Pancreas (tissue), 10 donors: ENCODE measurements at regions of chr17 and their contacts with region 1.

Region 1: DNA sequence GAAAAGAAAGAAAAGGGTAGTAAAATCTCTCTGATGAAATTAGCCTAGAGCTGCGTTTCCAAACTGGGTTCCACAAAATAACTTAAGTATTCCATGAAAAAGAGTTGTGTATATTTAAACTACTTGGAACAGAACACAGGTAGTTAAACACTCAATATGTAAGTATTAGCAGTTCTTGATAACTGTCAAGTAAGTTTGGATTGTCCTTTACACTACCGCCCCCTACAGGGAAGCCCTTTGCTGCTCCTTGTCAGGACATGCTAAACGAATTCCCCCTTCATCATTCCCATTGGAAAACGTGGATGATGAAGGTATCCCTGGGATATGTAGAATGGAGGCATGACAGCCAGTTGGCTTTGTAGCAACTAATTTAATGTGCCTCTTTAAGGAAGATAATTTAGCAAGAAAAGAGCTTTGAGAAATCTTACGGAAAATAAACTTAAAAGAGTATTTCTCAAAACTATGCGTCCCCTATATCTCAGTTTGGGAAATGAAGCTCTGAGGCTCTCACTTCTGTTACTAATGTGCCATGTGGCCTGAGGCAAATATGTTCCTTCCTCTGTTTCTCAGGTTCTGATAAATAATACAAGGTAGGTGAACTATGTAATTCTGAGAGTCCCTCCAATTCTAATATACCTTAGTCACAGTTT is 18.8 kb downstream of the NCBP3 start:
- DNase-seq: peak in 3 of 6 donors; percentile 26 to 65 (median 59)
- ATAC-seq: peak; percentile 56 to 85 (median 70)
- H3K4me3 ChIP-seq: no peak overlapping the region
- H3K27ac ChIP-seq: no peak overlapping the region
- H3K4me1 ChIP-seq: no peaks in the 10 kb centered on the region
- H3K27me3 ChIP-seq: no peaks in the 10 kb centered on the region
- CTCF ChIP-seq: peak; percentile 12 to 54 (median 40)

Region 2: DNA sequence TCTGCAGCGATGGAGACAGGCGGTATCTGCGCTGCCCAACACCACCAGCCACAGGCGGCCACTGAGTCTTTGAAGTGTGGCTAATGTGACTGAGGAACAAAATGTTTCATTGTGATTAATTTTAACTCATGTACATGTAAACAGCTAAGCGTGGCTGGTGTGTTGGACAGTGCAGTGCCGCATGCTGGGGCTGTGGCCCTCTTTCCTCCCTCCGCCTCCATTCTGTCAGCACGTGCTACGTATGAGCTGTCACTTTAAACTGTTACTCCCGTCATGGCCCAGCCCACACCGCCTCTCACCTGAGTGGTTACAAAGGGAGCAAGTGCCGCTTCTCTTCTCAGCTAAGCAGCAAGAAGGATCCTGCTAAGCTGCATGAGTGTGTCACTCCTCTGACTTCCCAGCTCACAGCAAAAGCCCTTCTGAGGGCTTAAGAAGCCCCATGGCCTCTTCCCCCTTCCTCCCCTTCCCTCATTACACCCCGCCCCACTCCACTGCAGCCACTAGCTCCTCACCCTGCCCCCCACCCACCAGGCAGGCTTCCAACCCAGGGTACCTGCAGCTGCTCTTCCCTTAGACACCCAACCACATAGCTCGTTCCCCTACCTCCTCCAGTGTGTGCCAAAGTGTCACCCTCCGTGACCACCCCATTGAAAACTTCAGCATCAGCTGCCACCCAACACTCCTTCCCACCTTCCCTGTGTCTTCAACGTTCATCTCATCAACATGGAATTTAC is 88.5 kb before region 1 on chr17:
- intact Hi-C with region 1: loop called in 2 of 3 experiments (anchors 10 kb)
- DNase-seq: peak; percentile 59 to 89 (median 72)
- ATAC-seq: peak; percentile 85 to 89 (median 86)
- H3K4me3 ChIP-seq: peak overlapping the region in 2 of 4 donors; percentile 30 to 31
- H3K27ac ChIP-seq: peak overlapping the region in 2 of 4 donors; percentile 35 to 63
- H3K4me1 ChIP-seq: peaks cover 7 to 9% (median 9%) of the 10 kb centered on the region in 3 donors
- H3K27me3 ChIP-seq: no peaks in the 10 kb centered on the region
- CTCF ChIP-seq: no peak

Region 3: DNA sequence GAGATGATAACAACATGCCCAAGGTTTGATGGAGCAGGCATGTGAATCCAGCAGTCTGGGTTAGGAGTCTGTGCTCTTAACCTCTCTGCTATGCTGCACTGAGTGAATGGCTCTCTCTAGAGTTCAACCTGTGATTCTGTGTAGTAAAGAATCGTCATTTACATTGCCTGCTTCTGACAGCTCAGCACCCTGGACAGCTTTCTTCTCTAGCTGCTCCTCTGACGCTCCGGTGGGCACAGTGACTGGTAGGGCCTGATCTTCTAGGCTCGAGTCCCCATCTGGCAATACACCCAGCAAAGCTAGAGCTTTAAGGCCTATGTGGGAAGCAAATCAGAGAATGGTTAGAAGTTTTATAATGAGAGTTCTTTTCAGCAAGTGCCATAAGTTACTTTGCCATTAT is 222.3 kb after region 1 on chr17:
- intact Hi-C with region 1: no loop called
- DNase-seq: no peak
- ATAC-seq: peak in 1 of 4 donors; percentile 39
- H3K4me3 ChIP-seq: no peak overlapping the region
- H3K27ac ChIP-seq: no peak overlapping the region
- H3K4me1 ChIP-seq: no peaks in the 10 kb centered on the region
- H3K27me3 ChIP-seq: no peaks in the 10 kb centered on the region
- CTCF ChIP-seq: no peak